ENCODE measurements at regions of chr19 and their contacts with region 1.

Region 1: DNA sequence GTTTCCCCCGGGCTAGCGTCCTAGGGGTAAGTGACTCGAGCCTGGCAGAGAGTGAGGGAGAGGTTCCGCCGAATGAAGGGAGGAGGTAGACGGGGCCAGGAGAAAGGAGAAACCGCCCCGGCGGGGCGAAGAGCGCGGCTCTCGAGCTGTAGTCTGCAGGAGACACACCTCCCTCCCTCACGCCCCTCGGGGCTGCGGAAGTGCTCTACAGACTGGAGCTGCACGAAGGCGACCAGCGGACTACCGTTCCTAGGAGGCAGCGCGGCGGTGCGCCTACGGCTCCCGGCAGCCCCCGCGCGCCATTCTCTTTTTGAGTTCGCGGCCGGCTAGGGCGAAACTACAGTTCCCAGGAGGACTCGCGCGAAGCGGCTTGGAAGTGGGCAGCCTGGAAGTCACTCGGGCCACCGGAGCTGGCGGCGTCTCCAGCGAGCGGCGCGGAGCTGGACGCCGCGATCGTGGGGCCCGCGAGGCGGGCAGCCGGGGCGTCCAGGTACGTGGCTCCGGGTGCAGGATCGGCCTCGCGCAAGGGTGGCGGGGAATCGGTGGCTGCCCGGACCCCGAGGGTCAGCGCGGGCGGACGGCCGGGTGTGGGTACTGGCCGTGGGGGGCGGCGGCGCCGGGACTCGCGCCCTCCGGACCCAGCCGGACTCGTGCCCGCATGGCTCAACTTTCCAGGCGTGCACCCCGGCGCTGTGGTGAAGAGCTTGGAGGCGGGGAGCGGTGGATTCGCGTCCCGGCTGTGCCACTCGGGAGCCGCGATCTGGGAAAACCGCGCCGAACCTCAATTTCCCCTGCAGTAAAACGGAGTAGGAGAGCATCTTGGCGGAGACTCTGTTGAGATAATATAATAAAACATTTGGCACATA is at the start of gene SIPA1L3:
- DNase-seq: peak; percentile 94 to 96
- H3K4me3 ChIP-seq: peak within 1 kb of the TSS; percentile 80 to 87
- H3K27ac ChIP-seq: peak within 1 kb of the TSS; percentile 67 to 72
- H3K4me1 ChIP-seq: peaks cover 0 to 21% (median 11%) of the 10 kb centered on the region in 4 donors
- H3K27me3 ChIP-seq: no peaks in the 10 kb centered on the region
- CTCF ChIP-seq: no peak

Region 2: DNA sequence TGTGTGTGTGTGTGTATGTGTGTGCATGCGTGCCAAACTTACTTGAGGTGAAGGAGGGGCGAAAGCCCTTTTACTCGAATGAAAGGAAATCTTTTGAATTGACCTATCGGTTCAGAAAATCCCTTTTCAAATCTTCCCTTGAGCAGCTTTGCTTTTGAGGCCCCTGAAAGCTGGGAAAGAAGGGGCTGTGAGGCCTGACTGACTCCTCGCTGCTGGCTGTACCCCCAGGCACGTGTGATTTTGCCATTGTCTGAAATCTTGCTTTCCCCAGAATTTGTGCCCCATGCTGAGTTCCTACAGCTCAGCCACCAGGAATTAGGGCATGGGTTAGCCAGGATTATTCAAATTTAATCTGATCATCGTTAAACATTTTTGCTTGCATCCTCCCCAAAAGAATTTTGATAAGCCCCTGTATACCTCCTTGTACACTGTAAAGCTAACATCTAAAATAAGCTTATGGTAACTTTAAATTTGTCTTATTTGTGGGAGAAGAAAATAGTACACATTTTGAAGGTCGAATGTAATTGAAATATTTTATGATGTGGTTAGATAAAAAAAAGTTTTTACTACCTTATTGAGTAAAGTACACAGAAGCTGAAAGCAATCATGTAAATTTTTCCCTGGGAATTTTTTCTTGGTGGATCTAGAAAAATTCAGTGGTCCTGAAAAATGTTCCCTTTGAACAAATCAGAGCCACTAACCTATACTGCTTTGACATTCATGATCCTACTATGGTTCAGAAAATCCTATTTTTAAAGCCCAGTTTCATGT is 46.6 kb after region 1 on chr19:
- intact Hi-C with region 1: no loop called
- DNase-seq: no peak
- H3K4me3 ChIP-seq: no peak overlapping the region
- H3K27ac ChIP-seq: no peak overlapping the region
- H3K4me1 ChIP-seq: peaks cover 0 to 6% (median 2%) of the 10 kb centered on the region in 4 donors
- H3K27me3 ChIP-seq: no peaks in the 10 kb centered on the region
- CTCF ChIP-seq: no peak

Region 3: GRCh38 chr19:38224014-38224862 is 317.1 kb after region 1 on chr19 and contains the start of gene DPF1:
- intact Hi-C with region 1: loop called (anchors 10 kb)
- DNase-seq: no peak
- H3K4me3 ChIP-seq: peak within 1 kb of the TSS; percentile 13 to 36
- H3K27ac ChIP-seq: no peak within 1 kb of the TSS
- H3K4me1 ChIP-seq: peaks cover 0 to 26% (median 21%) of the 10 kb centered on the region in 4 donors
- H3K27me3 ChIP-seq: peaks cover 6 to 83% of the 10 kb centered on the region in 2 donors
- CTCF ChIP-seq: no peak

Measured in tibial artery (tissue), 4 donors.